Activated CD4-positive, alpha-beta T cell treated with anti-CD3 and anti-CD28 coated beads for 36 hours (primary cell): ENCODE measurements at regions of chr12 and their contacts with region 1.

Region 1: GRCh38 chr12:120686690-120687577 is at the start of gene MLEC:
- DNase-seq: peak; percentile 99
- ATAC-seq: peak; percentile 86
- H3K4me3 Mint-ChIP-seq: peak within 1 kb of the TSS; percentile 92
- H3K27ac Mint-ChIP-seq: peak within 1 kb of the TSS; percentile 85
- H3K4me1 Mint-ChIP-seq: peaks cover 46% of the 10 kb centered on the region
- H3K27me3 Mint-ChIP-seq: no peaks in the 10 kb centered on the region
- total RNA-seq, gene MLEC: 70.6 to 89.5 TPM

Region 2: GRCh38 chr12:120317224-120318105 is 369.5 kb before region 1 on chr12:
- CTCF ChIA-PET with region 1: no interaction called
- POLR2A ChIA-PET with region 1: no interaction called
- intact Hi-C with region 1: loop called in 1 of 2 experiments (anchors 1 kb)
- DNase-seq: peak; percentile 100
- ATAC-seq: peak; percentile 100
- H3K4me3 Mint-ChIP-seq: peak overlapping the region; percentile 92
- H3K27ac Mint-ChIP-seq: peak overlapping the region; percentile 94
- H3K4me1 Mint-ChIP-seq: peaks cover 12% of the 10 kb centered on the region
- H3K27me3 Mint-ChIP-seq: no peaks in the 10 kb centered on the region

Region 3: DNA sequence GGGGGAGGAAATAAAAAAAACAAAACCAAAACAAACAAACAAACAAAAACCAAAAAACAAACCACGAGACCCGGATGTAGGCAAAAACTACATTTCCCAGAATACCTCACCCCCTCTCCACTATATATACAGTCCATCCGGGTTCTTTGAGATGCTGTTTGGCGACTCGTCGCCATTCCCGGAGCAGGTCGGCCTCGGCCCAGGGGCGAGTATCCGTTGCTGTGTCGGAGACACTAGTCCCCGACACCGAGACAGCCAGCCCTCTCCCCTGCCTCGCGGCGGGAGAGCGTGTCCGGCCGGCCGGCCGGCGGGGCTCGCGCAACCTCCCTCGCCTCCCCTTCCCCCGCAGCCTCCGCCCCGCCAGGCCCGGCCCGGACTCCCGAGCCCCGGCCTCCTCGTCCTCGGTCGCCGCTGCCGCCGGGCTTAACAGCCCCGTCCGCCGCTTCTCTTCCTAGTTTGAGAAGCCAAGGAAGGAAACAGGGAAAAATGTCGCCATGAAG is 152.7 kb before region 1 on chr12 and contains the start of gene RNF10:
- CTCF ChIA-PET with region 1: no interaction called
- POLR2A ChIA-PET with region 1: no interaction called
- intact Hi-C with region 1: loop called in 1 of 2 experiments (anchors 2 kb)
- DNase-seq: peak; percentile 82
- ATAC-seq: peak; percentile 67
- H3K4me3 Mint-ChIP-seq: peak within 1 kb of the TSS; percentile 87
- H3K27ac Mint-ChIP-seq: peak within 1 kb of the TSS; percentile 95
- H3K4me1 Mint-ChIP-seq: peaks cover 46% of the 10 kb centered on the region
- H3K27me3 Mint-ChIP-seq: no peaks in the 10 kb centered on the region
- total RNA-seq, gene RNF10: 177 to 184 TPM

Region 4: DNA sequence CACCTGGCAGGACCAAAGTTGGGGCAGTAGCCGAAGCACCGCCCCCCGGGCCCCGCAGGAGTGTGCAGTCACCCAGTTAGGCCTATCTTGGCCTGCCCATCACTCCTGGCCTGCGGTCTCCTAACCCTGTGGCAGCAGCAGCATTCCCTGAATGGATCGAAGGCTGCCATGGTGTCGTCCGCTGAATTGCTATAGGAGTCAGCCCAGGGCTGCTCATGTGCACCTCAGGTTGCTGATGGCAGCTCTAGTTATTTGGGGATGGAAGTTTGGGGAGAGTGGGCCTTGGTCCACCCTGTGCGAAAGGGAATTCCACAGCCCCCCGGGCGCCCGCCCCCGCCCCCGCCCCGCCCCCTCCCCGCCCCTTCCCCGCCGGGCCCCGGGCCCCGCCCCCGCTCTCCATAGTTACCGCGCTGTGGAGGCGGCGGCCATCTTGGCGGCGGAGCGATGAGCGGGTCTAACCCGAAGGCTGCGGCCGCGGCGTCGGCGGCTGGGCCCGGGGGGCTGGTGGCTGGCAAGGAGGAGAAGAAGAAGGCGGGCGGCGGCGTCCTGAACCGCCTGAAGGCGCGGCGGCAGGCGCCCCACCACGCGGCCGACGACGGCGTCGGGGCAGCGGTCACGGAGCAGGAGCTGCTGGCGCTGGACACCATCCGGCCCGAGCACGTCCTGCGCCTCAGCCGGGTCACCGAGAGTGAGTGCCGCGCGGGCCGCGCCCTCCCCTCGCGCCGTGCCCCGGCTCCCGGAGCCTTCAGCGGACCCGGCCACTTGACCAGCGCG is 23.3 kb after region 1 on chr12 and contains the start of gene UNC119B:
- CTCF ChIA-PET with region 1: interaction called, 3 read pairs
- POLR2A ChIA-PET with region 1: no interaction called
- intact Hi-C with region 1: loop called (anchors 1 kb)
- DNase-seq: peak; percentile 83
- ATAC-seq: peak; percentile 78
- H3K4me3 Mint-ChIP-seq: peak within 1 kb of the TSS; percentile 86
- H3K27ac Mint-ChIP-seq: peak within 1 kb of the TSS; percentile 82
- H3K4me1 Mint-ChIP-seq: peaks cover 34% of the 10 kb centered on the region
- H3K27me3 Mint-ChIP-seq: no peaks in the 10 kb centered on the region
- total RNA-seq, gene UNC119B: 20.1 to 26.6 TPM

Region 5: GRCh38 chr12:120735181-120735580 is 48.2 kb after region 1 on chr12:
- CTCF ChIA-PET with region 1: no interaction called
- POLR2A ChIA-PET with region 1: no interaction called
- intact Hi-C with region 1: no loop called
- DNase-seq: no peak
- ATAC-seq: no peak
- H3K4me3 Mint-ChIP-seq: no peak overlapping the region
- H3K27ac Mint-ChIP-seq: no peak overlapping the region
- H3K4me1 Mint-ChIP-seq: no peaks in the 10 kb centered on the region
- H3K27me3 Mint-ChIP-seq: no peaks in the 10 kb centered on the region

Region 6: GRCh38 chr12:121038861-121039666 is 352.1 kb after region 1 on chr12 and contains the start of gene OASL:
- CTCF ChIA-PET with region 1: no interaction called
- POLR2A ChIA-PET with region 1: no interaction called
- intact Hi-C with region 1: loop called in 1 of 2 experiments (anchors 1 kb)
- DNase-seq: peak; percentile 72
- ATAC-seq: peak; percentile 58
- H3K4me3 Mint-ChIP-seq: peak within 1 kb of the TSS; percentile 78
- H3K27ac Mint-ChIP-seq: peak within 1 kb of the TSS; percentile 91
- H3K4me1 Mint-ChIP-seq: peaks cover 52% of the 10 kb centered on the region
- H3K27me3 Mint-ChIP-seq: peaks cover 14% of the 10 kb centered on the region
- total RNA-seq, gene OASL: 13.9 to 19.6 TPM

Region 7: GRCh38 chr12:121079736-121080272 is 392.9 kb after region 1 on chr12:
- CTCF ChIA-PET with region 1: no interaction called
- POLR2A ChIA-PET with region 1: no interaction called
- intact Hi-C with region 1: no loop called
- DNase-seq: no peak
- ATAC-seq: no peak
- H3K4me3 Mint-ChIP-seq: no peak overlapping the region
- H3K27ac Mint-ChIP-seq: no peak overlapping the region
- H3K4me1 Mint-ChIP-seq: no peaks in the 10 kb centered on the region
- H3K27me3 Mint-ChIP-seq: no peaks in the 10 kb centered on the region

Region 8: GRCh38 chr12:121351820-121352681 is 665.1 kb after region 1 on chr12 and contains the start of gene ANAPC5:
- CTCF ChIA-PET with region 1: no interaction called
- POLR2A ChIA-PET with region 1: no interaction called
- intact Hi-C with region 1: loop called in 1 of 2 experiments (anchors 1 kb)
- DNase-seq: peak; percentile 94
- ATAC-seq: peak; percentile 99
- H3K4me3 Mint-ChIP-seq: peak within 1 kb of the TSS; percentile 92
- H3K27ac Mint-ChIP-seq: peak within 1 kb of the TSS; percentile 97
- H3K4me1 Mint-ChIP-seq: peaks cover 24% of the 10 kb centered on the region
- H3K27me3 Mint-ChIP-seq: peaks cover under 1% of the 10 kb centered on the region
- total RNA-seq, gene ANAPC5: 113 to 118 TPM